ENCODE measurements at regions of chr11 and their contacts with region 1.

Region 1: DNA sequence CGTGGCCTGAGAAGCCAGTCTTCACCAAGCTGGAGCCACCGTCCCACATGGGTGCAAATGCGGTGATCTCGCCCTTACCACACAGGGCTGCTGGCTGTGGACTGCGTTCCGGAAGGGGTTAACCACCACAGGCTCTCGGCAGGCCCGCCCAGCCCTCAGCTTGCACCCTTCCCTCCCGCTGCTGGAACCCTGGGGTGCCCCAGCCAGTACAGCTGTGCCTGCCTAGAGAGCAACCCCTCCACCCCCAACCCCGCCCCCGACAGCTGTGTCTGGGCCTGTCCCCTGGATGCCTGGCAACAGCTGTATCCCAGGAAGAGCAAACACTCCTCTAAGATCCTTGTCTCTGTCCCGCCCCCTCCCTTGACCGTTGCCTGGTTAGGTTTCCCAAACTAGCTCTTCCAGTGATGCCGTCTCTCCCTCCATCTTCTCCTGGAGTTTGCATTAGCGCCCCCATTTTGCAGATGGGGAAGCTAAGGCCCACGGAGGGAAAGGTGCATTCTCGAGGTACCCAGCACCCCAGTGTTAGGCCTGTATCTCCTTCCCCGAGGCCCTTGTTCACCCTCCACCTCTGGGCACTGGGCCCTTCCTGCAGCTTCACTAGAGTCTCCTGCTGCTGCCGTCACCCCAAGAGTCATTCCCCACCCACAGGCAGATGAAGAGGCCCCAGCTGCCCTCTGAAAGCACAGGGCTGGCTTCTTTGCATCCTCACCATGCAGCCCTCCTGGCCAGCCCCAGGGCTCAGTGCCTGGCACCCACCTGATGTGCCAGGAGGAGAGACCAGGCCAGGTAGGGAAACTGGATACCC is 12.6 kb upstream of the COX8A start:
- DNase-seq: no peak
- ATAC-seq: peak; percentile 15 to 64 (median 36)
- H3K4me3 ChIP-seq: no peak overlapping the region
- H3K27ac ChIP-seq: no peak overlapping the region
- H3K4me1 ChIP-seq: peaks cover 0 to 7% (median 0%) of the 10 kb centered on the region in 9 donors
- H3K27me3 ChIP-seq: no peaks in the 10 kb centered on the region
- CTCF ChIP-seq: no peak

Region 2: DNA sequence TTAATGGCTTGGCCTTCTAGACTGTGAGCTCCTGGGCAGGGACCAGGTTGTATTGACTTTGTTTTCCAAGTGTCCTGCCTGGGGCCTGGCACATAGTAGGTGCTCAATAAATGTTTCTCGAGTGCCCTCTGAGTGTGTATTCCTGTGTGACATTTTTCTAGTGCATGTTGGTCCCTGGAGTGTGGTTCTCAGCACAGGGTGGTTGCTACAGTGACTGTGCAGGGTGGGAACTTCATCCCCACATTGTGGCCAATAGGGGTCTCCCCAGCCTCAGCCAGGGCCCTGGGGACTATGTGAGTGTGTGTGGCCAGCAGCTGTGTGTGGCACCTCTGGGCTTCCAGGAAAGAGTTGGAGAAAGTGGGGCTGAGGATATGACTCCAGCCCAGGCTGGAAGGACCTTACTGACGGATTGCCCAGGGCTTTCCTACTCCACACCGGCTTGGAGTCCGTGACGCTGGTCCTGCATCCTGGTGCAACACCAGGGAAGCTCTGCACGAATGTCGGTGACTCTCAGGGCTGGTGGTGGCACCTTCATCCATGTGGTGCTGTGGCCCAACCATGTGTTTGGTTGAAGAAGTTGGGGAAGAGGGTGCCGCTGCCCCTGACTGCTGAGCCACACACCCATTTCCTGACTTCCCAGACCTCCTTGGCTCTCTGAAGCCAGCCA is 131.9 kb before region 1 on chr11:
- intact Hi-C with region 1: loop called in 1 of 10 experiments (anchors 5 kb)
- DNase-seq: no peak
- ATAC-seq: peak in 5 of 8 donors; percentile 27 to 52 (median 46)
- H3K4me3 ChIP-seq: no peak overlapping the region
- H3K27ac ChIP-seq: no peak overlapping the region
- H3K4me1 ChIP-seq: no peaks in the 10 kb centered on the region
- H3K27me3 ChIP-seq: no peaks in the 10 kb centered on the region
- CTCF ChIP-seq: peak in 6 of 9 donors; percentile 8 to 32 (median 20)

Region 3: DNA sequence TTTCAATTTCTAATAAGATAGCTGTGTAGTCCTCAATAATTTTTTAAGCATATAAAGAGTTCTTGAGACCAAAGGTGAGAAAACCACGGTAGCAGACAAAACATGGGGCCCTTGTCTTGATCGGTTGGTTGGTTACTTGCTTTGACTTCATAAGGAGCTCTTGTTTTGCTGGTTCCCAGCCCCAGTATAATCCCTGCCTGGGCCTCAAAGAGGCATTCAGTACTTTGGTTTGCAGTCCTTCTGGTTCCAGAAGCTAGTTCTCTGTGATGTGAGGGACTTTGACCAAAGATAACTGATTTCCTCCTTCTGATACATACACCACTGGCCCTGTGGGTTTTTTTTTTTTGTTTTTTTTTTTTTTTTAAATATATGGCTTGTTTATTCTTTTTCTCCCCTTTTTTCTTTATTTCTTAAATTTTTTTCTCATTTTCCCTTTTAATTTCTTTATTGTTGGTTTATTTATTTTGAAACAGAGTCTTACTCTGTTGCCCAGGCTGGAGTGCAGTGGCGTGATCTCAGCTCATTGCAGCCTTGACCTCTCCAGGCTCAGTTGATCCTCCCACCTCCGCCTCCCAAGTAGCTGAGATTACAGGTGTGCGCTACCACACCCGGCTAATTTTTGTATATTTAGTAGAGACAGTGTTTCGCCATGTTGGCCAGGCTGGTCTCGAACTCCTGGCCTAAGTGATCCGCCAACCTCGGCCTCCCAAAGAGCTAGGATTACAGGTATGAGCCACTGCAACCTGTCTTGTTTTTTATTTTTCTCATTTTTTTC is 105.6 kb before region 1 on chr11:
- intact Hi-C with region 1: no loop called
- DNase-seq: no peak
- ATAC-seq: no peak
- H3K4me3 ChIP-seq: no peak overlapping the region
- H3K27ac ChIP-seq: peak overlapping the region in 1 of 10 donors; percentile 34
- H3K4me1 ChIP-seq: peaks cover 6 to 76% (median 38%) of the 10 kb centered on the region in 9 donors
- H3K27me3 ChIP-seq: no peaks in the 10 kb centered on the region
- CTCF ChIP-seq: no peak

Measured in heart right ventricle (tissue), 16 donors.